Mammary epithelial cell (primary cell): ENCODE measurements at regions of chr13 and their contacts with region 1.

Region 1: GRCh38 chr13:101298517-101298916 is 117.8 kb downstream of the NALCN start:
- DNase-seq: no peak
- H3K4me3 ChIP-seq: no peak overlapping the region
- H3K27ac ChIP-seq: no peak overlapping the region
- H3K4me1 ChIP-seq: no peaks in the 10 kb centered on the region
- H3K27me3 ChIP-seq: no peaks in the 10 kb centered on the region
- CTCF ChIP-seq: peak in 1 of 2 donors; percentile 28

Region 2: DNA sequence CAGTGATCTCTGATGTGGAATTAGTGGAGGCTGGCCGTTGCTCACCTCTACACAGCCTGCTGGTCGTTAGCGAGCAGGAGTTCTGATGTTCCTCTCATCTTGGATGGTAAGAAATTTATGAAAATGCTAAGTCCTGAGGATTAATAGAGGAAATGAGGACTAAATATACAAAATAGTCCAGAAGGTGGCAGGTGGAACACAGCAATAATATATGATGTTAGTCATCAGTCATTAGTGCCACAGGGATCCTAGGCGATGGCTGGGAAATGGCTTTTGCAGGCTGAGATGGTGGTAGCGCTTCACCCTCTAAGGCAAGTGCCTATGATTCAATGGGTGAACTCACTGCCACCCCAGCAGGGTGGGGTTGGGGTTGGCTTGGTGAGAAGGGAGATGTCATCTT is 285.3 kb before region 1 on chr13:
- CTCF ChIA-PET with region 1: no interaction called
- dilution Hi-C with region 1: no loop called
- in situ Hi-C with region 1: no loop called
- intact Hi-C with region 1: no loop called
- DNase-seq: peak; percentile 1
- H3K4me3 ChIP-seq: no peak overlapping the region
- H3K27ac ChIP-seq: no peak overlapping the region
- H3K4me1 ChIP-seq: no peaks in the 10 kb centered on the region
- H3K27me3 ChIP-seq: no peaks in the 10 kb centered on the region
- CTCF ChIP-seq: peak in 1 of 2 donors; percentile 16

Region 3: DNA sequence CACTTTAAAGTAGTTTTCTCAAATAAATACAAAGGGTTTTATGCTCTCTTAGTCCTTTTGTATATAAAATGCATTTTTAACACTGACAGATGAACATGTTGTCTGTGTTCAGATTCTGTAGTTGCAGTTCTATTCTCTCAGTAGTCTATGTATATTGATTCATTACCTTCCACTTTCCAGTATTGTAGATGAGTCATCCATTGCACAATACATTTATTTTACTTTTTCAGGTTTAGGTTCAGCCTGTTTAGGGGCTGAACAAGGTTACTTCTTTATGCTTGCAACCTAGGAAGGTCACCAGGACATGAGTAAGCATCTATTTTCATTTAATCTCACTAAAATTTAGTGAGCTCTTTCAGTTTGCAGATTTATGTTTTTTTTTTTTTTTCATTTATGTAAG is 55.8 kb before region 1 on chr13:
- CTCF ChIA-PET with region 1: no interaction called
- dilution Hi-C with region 1: no loop called
- in situ Hi-C with region 1: no loop called
- intact Hi-C with region 1: no loop called
- DNase-seq: no peak
- H3K4me3 ChIP-seq: no peak overlapping the region
- H3K27ac ChIP-seq: no peak overlapping the region
- H3K4me1 ChIP-seq: no peaks in the 10 kb centered on the region
- H3K27me3 ChIP-seq: no peaks in the 10 kb centered on the region
- CTCF ChIP-seq: no peak

Region 4: DNA sequence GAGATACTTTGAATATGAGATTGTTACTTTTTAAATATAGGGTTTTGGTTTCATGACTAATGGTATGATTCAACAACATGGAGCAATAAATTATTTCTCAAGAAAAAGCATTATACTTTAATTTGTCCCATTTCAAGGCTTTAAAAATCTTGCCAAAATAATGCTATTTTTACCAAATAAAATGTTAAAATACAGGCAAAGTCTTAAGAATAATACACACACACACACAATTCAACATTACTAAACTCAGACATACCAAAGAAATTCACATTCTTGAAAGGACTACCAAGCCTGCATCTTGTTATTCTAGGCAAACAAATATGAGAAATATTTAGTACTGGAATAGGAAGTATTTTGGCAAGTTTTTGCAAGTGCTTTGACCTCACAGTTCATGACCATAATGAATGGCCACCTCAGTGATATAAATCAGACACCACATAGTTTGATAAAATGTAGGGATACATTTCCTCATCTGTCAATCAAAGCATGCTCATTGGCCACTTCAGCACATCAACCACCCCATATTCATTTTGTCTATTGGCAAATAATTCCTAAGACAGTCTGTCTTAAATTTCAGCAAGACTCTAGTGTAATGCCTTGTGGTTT is 10.6 kb after region 1 on chr13:
- CTCF ChIA-PET with region 1: no interaction called
- dilution Hi-C with region 1: no loop called
- in situ Hi-C with region 1: no loop called
- intact Hi-C with region 1: no loop called
- DNase-seq: peak; percentile 45
- H3K4me3 ChIP-seq: no peak overlapping the region
- H3K27ac ChIP-seq: peak overlapping the region; percentile 30
- H3K4me1 ChIP-seq: peaks cover 23% of the 10 kb centered on the region
- H3K27me3 ChIP-seq: no peaks in the 10 kb centered on the region
- CTCF ChIP-seq: no peak

Region 5: DNA sequence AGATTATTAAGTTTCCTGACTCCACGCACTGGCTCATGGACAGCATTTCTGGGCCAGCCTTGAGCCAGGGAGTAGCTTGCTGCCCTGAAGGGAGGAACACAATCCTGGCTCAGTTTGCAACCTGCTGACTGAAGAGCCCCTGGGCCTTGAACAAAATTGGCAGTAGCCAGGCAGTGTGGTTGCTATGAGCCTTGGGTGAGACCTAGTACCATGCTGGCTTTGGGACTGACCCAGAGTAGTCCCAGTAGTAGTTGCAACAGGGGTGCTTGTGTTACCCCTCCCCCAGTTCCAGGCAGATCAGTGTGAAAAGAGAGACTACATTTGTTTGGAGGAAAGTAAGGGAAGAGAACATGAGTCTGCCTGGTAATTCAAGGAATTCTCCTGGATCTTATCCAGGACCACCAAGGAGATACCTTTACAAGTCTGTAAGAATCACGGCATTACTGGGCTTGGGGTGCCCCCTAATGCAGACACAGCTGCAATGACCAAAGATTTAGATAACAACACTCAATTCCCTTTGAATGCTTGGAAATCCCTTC is 176.0 kb after region 1 on chr13:
- CTCF ChIA-PET with region 1: no interaction called
- dilution Hi-C with region 1: no loop called
- in situ Hi-C with region 1: no loop called
- intact Hi-C with region 1: loop called (anchors 1 kb)
- DNase-seq: no peak
- H3K4me3 ChIP-seq: no peak overlapping the region
- H3K27ac ChIP-seq: no peak overlapping the region
- H3K4me1 ChIP-seq: peaks cover 18% of the 10 kb centered on the region
- H3K27me3 ChIP-seq: no peaks in the 10 kb centered on the region
- CTCF ChIP-seq: peak; percentile 40 to 55